H1 (cell line): ENCODE measurements at regions of chr1 and their contacts with region 1.

Region 1: GRCh38 chr1:228004331-228004855 is 2.4 kb upstream of the WNT3A start:
- DNase-seq: peak in 1 of 2 experiments; percentile 71
- H3K4me3 ChIP-seq: peak overlapping the region in 3 of 4 experiments; percentile 0 to 57 (median 10); a peak in 5 of 8 replicates
- H3K27ac ChIP-seq: no peak overlapping the region
- H3K4me1 ChIP-seq: peaks cover 0 to 43% (median 22%) of the 10 kb centered on the region in 4 experiments; a peak in 6 of 7 replicates
- H3K27me3 ChIP-seq: peaks cover 53 to 94% (median 69%) of the 10 kb centered on the region in 4 experiments
- CTCF ChIP-seq: peak in 2 of 3 experiments; percentile 77 to 90; a peak in 3 of 4 replicates
- EP300 ChIP-seq: no peak
- POLR2A ChIP-seq: no peak
- RAD21 ChIP-seq: peak; percentile 57 to 67

Region 2: GRCh38 chr1:227987181-227987580 is 17.2 kb before region 1 on chr1:
- CTCF ChIA-PET with region 1: interaction called, 12 read pairs
- POLR2A ChIA-PET with region 1: no interaction called
- DNase-seq: no peak
- H3K4me3 ChIP-seq: no peak overlapping the region
- H3K27ac ChIP-seq: no peak overlapping the region
- H3K4me1 ChIP-seq: no peaks in the 10 kb centered on the region
- H3K27me3 ChIP-seq: no peaks in the 10 kb centered on the region
- CTCF ChIP-seq: no peak
- EP300 ChIP-seq: no peak
- POLR2A ChIP-seq: no peak
- RAD21 ChIP-seq: no peak

Region 3: DNA sequence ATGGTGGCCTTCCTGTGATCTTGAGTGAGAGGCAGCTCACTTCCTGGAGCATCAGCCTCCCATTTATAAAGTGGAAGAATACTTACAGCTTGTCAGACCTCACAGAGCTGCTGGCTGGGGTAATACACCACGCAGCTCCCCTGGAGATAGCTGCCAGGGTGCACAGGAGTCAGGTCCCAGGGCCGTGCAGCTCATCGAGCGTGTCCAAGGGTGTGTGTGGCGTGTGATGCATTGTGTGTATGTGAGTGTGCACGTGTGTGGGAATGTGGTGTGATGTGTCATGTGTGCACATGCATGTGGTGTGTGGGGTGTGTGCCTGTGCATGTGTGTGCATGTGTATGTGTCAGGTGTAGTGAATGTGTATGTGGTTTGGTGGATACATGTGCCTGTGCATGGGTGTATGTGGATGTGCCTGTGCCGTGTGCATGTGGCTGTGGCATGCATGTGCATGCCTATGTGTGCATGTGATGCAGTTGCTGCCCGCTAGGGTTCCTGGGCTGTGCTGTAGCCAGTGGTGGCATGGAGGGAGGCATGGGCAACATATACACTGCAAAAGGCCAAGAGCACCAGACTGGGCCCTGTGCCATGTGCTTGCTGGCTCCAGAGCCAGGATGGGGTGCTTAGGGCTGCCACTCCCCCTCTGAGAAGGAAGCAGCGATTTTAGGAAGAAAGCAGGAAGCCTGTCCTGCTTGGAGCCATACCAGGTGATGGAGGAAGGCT is 27.0 kb after region 1 on chr1:
- CTCF ChIA-PET with region 1: interaction called, 26 read pairs
- POLR2A ChIA-PET with region 1: no interaction called
- DNase-seq: peak in 1 of 2 experiments; percentile 26
- H3K4me3 ChIP-seq: no peak overlapping the region
- H3K27ac ChIP-seq: no peak overlapping the region
- H3K4me1 ChIP-seq: peaks cover 0 to 2% (median 0%) of the 10 kb centered on the region in 4 experiments; a peak in 1 of 7 replicates
- H3K27me3 ChIP-seq: peaks cover 0 to 9% (median 4%) of the 10 kb centered on the region in 4 experiments; a peak in 5 of 7 replicates
- CTCF ChIP-seq: no peak
- EP300 ChIP-seq: no peak
- POLR2A ChIP-seq: no peak
- RAD21 ChIP-seq: no peak

Region 4: GRCh38 chr1:228048659-228049298 is 44.4 kb after region 1 on chr1:
- CTCF ChIA-PET with region 1: interaction called, 197 read pairs
- POLR2A ChIA-PET with region 1: no interaction called
- DNase-seq: peak in 1 of 2 experiments; percentile 33
- H3K4me3 ChIP-seq: no peak overlapping the region
- H3K27ac ChIP-seq: no peak overlapping the region
- H3K4me1 ChIP-seq: peaks cover 0 to 11% (median 3%) of the 10 kb centered on the region in 4 experiments; a peak in 4 of 7 replicates
- H3K27me3 ChIP-seq: peaks cover 2 to 27% (median 14%) of the 10 kb centered on the region in 4 experiments; a peak in 5 of 7 replicates
- CTCF ChIP-seq: no peak
- EP300 ChIP-seq: no peak
- POLR2A ChIP-seq: no peak
- RAD21 ChIP-seq: no peak

Region 5: GRCh38 chr1:228082135-228082891 is 77.9 kb after region 1 on chr1 and contains the start of gene ARF1:
- CTCF ChIA-PET with region 1: interaction called, 115 read pairs
- POLR2A ChIA-PET with region 1: interaction called, 4 read pairs
- DNase-seq: peak; percentile 84 to 94
- H3K4me3 ChIP-seq: peak within 1 kb of the TSS; percentile 91 to 99 (median 95)
- H3K27ac ChIP-seq: peak within 1 kb of the TSS; percentile 95
- H3K4me1 ChIP-seq: peaks cover 7 to 30% (median 8%) of the 10 kb centered on the region in 4 experiments
- H3K27me3 ChIP-seq: peaks cover 0 to 14% (median 12%) of the 10 kb centered on the region in 4 experiments; a peak in 5 of 7 replicates
- CTCF ChIP-seq: no peak
- EP300 ChIP-seq: no peak
- POLR2A ChIP-seq: peak in 1 of 2 experiments; percentile 91; a peak in 2 of 3 replicates
- RAD21 ChIP-seq: no peak
- total RNA-seq, gene ARF1: 265 and 267 TPM in 2 replicates